MCF 10A (cell line): ENCODE measurements at regions of chr7 and their contacts with region 1.

Region 1: DNA sequence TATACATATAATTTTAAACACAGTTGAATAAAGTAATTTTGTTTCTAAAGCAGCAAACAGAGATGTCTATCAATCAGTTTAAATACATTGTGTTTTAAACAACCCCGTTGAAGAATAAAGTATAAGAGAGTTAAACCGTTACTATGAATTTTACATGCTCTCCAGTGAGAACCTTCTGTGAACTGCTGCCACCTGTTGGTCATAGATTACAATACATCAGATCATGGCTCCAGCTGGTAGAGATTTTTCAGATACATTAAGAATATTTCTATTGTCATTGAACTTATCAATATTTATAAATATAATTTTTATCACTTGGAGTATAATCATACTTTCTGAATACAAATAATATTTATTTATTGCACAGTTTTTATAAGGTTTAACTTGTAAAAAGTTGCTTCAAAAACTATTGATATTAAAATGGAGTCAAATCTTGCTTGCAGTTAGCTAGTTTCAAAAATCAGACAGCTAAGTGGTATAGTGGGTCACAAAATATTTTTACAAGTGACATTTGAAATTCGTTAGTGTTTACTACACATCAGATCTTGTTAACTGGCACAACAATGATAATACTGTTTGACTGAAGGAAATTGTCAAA is 561.2 kb upstream of the PHF14 start:
- DNase-seq: peak; percentile 66
- H3K4me3 Mint-ChIP-seq: no peak overlapping the region
- H3K27ac Mint-ChIP-seq: no peak overlapping the region
- H3K4me1 Mint-ChIP-seq: no peaks in the 10 kb centered on the region
- H3K27me3 Mint-ChIP-seq: peaks cover 30% of the 10 kb centered on the region
- CTCF ChIP-seq: peak; percentile 53

Region 2: DNA sequence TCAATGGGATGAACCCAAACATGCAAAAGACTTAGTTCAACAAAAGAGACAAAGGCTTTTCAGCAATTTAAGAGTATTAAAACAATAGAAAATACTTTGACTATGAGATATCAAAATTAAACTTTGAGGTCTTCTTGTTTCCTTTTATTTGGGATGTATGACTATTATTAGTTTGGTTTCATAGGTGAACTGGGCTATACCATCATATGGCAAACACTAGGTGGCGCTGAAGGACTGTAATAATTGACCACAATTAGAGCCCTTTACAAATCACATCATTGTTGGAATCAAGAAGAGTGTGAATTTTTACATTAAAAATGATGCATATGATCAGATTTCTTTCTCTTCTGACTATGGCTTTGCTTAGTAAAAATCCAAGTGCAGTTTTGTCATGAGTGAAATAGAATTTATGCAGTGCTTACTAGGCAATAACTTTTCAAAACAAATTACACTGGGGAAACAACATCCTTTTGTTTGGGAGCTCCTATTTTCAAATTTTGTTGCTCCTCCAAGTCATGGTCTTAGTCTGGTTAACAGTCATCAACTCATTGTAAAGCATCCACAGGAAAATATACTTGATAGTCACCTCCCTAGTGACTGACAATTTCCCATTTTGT is 1993.8 kb before region 1 on chr7:
- CTCF ChIA-PET with region 1: interaction called, 3 read pairs
- POLR2A ChIA-PET with region 1: no interaction called
- intact Hi-C with region 1: loop called (anchors 10 kb)
- DNase-seq: peak; percentile 75
- H3K4me3 Mint-ChIP-seq: no peak overlapping the region
- H3K27ac Mint-ChIP-seq: no peak overlapping the region
- H3K4me1 Mint-ChIP-seq: no peaks in the 10 kb centered on the region
- H3K27me3 Mint-ChIP-seq: peaks cover 36% of the 10 kb centered on the region
- CTCF ChIP-seq: peak; percentile 69

Region 3: GRCh38 chr7:10022957-10023356 is 389.6 kb before region 1 on chr7:
- CTCF ChIA-PET with region 1: no interaction called
- POLR2A ChIA-PET with region 1: no interaction called
- intact Hi-C with region 1: loop called (anchors 10 kb)
- DNase-seq: peak; percentile 35
- H3K4me3 Mint-ChIP-seq: no peak overlapping the region
- H3K27ac Mint-ChIP-seq: no peak overlapping the region
- H3K4me1 Mint-ChIP-seq: no peaks in the 10 kb centered on the region
- H3K27me3 Mint-ChIP-seq: peaks cover 35% of the 10 kb centered on the region
- CTCF ChIP-seq: no peak

Region 4: DNA sequence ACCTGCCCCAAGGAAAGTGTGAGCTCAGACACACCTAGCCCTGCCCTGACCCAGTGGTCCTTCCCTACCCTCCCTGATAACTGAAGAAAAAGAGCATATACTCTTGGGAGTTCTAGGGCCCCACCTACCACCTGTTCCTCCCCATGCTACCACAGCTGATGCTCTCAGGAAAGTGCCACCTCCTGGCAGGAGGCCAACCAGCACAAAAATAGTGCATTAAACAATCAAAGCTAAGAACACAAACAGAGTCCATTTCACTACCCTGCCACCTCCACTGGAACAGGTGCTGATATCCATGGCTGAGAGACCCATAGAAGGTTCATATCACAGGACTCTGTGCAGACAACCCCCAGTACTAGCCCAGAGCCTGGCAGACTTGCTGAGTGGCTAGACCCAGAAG is 272.5 kb after region 1 on chr7:
- CTCF ChIA-PET with region 1: no interaction called
- POLR2A ChIA-PET with region 1: no interaction called
- intact Hi-C with region 1: no loop called
- DNase-seq: no peak
- H3K4me3 Mint-ChIP-seq: no peak overlapping the region
- H3K27ac Mint-ChIP-seq: no peak overlapping the region
- H3K4me1 Mint-ChIP-seq: no peaks in the 10 kb centered on the region
- H3K27me3 Mint-ChIP-seq: no peaks in the 10 kb centered on the region
- CTCF ChIP-seq: no peak

Region 5: GRCh38 chr7:10708447-10708846 is 295.9 kb after region 1 on chr7:
- CTCF ChIA-PET with region 1: interaction called, 3 read pairs
- POLR2A ChIA-PET with region 1: no interaction called
- intact Hi-C with region 1: loop called (anchors 5 kb)
- DNase-seq: peak; percentile 40
- H3K4me3 Mint-ChIP-seq: no peak overlapping the region
- H3K27ac Mint-ChIP-seq: no peak overlapping the region
- H3K4me1 Mint-ChIP-seq: no peaks in the 10 kb centered on the region
- H3K27me3 Mint-ChIP-seq: no peaks in the 10 kb centered on the region
- CTCF ChIP-seq: peak; percentile 30

Region 6: DNA sequence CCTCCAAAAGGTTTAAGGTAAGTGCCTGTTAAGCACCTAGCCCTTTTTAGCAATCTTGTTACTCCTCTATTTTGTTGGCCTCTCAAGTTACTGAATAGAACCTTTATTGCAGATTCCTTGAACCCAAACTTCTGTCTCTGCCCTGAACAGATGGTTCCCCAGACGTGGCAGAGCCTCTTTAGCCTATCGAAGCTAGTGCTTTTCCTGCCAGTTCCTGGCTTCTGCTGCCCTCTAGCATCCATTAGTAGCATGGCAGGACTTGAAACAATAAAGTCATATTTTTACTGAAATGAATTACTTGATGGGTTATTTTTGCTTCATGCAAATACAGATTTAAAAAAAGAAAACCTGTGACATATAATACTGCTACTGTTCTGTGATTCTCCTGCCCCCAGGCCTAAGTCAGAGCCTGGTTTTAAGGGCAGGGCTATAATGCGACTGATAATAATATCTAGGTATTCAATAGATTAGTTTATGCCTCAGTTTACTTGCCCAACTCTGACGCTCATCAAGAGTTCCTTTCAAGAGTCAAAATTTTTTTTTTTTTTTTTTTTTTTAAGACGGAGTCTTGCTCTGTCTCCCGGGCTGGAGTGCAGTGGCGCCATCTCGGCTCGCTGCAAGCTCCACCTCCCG is 476.9 kb after region 1 on chr7:
- CTCF ChIA-PET with region 1: interaction called, 19 read pairs
- POLR2A ChIA-PET with region 1: no interaction called
- intact Hi-C with region 1: loop called (anchors 1 kb)
- DNase-seq: peak; percentile 68
- H3K4me3 Mint-ChIP-seq: no peak overlapping the region
- H3K27ac Mint-ChIP-seq: no peak overlapping the region
- H3K4me1 Mint-ChIP-seq: no peaks in the 10 kb centered on the region
- H3K27me3 Mint-ChIP-seq: no peaks in the 10 kb centered on the region
- CTCF ChIP-seq: peak; percentile 83

Region 7: GRCh38 chr7:11343818-11344413 is 931.4 kb after region 1 on chr7:
- CTCF ChIA-PET with region 1: no interaction called
- POLR2A ChIA-PET with region 1: no interaction called
- intact Hi-C with region 1: loop called (anchors 5 kb)
- DNase-seq: peak; percentile 62
- H3K4me3 Mint-ChIP-seq: no peak overlapping the region
- H3K27ac Mint-ChIP-seq: no peak overlapping the region
- H3K4me1 Mint-ChIP-seq: peaks cover 12% of the 10 kb centered on the region
- H3K27me3 Mint-ChIP-seq: no peaks in the 10 kb centered on the region
- CTCF ChIP-seq: peak; percentile 62